ENCODE measurements at regions of chr3 and their contacts with region 1.

Region 1: GRCh38 chr3:32502118-32502945 is at the start of gene CMTM6:
- DNase-seq: peak; percentile 83 to 90 (median 86)
- ATAC-seq: peak; percentile 97
- H3K4me3 ChIP-seq: peak within 1 kb of the TSS; percentile 97
- H3K4me1 ChIP-seq: peaks cover 5% of the 10 kb centered on the region
- CTCF ChIP-seq: no peak
- total RNA-seq, gene CMTM6: 40.7 to 58.5 (median 48.4) TPM

Region 2: GRCh38 chr3:31692726-31693125 is 809.6 kb before region 1 on chr3:
- intact Hi-C with region 1: no loop called
- DNase-seq: no peak
- ATAC-seq: no peak
- H3K4me3 ChIP-seq: no peak overlapping the region
- H3K4me1 ChIP-seq: no peaks in the 10 kb centered on the region
- CTCF ChIP-seq: no peak

Region 3: GRCh38 chr3:32675164-32675563 is 172.8 kb after region 1 on chr3:
- intact Hi-C with region 1: loop called in 1 of 2 experiments (anchors 10 kb)
- DNase-seq: no peak
- ATAC-seq: no peak
- H3K4me3 ChIP-seq: no peak overlapping the region
- H3K4me1 ChIP-seq: no peaks in the 10 kb centered on the region
- CTCF ChIP-seq: no peak